ENCODE measurements at regions of chr5 and their contacts with region 1.

Region 1: DNA sequence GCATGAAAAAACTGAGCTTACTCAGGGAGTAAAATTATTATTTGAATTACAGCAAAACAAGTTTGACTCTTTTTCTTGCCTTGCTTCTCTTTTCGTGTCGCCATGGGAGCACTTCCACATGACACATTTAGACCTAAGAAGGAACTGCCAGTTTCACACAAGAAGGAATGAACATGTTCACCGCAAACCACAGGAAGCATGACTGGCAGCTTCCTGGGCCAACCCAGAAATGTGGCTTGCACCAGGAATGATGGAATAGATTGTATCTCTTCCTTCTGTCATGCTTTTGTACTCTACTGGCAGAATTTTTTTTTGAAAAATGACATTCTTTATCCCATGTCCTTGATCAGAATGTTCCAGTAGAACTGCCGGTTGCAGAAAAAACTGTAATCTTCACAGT is 32.9 kb upstream of the MAN2A1 start:
- DNase-seq: peak; percentile 91 to 98 (median 97)
- H3K4me3 ChIP-seq: peak overlapping the region in 1 of 3 experiments; percentile 50
- H3K4me3 Mint-ChIP-seq: peak overlapping the region in 1 of 2 donors; percentile 77
- H3K27ac ChIP-seq: peak overlapping the region in 1 of 2 donors; percentile 86
- H3K27ac Mint-ChIP-seq: peak overlapping the region; percentile 84 to 99 (median 98)
- H3K4me1 ChIP-seq: peaks cover 44 to 52% of the 10 kb centered on the region in 2 donors
- H3K4me1 Mint-ChIP-seq: peaks cover 47% of the 10 kb centered on the region
- H3K27me3 ChIP-seq: no peaks in the 10 kb centered on the region
- H3K27me3 Mint-ChIP-seq: no peaks in the 10 kb centered on the region
- CTCF ChIP-seq: no peak

Region 2: DNA sequence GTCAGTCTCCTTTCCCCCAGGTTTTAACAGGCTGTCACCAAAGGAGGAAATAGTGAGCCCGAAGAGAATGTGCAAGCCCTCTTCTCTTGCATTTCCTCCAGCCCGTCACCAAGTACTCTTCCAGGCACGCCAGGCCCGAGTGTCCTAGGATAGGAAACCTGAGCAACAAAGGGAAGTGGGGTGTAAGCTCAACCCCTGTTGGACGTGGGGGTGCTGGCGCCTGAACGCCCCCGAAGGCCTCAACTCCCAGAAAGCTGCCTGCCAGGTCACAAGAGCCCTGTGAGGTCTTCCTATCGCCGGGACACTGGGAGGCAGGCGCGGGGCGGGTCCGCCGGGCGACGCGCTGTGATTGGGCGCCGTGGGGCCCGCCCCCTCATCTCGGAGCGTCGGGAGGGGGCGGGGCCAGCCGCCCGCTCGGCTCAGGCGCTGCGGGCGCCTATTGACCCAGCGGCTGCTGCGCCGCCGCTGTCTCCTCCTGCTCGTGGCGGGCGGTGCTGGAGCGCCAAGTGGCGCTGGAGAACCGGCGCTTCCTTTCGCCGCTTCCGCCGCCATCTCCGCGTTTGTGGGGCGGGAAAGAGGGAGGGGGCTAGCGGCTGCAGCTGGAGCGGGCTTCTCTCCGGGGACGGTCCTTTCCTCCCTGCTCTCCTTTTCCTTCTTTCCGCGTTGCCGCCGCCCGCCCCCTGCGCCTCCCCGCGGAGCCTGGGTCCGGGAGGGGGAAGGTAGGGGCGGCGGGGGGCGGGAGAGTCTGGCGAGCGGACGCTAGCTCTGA is 32.3 kb after region 1 on chr5:
- intact Hi-C with region 1: loop called (anchors 2 kb)
- DNase-seq: peak; percentile 88 to 92 (median 88)
- H3K4me3 ChIP-seq: peak overlapping the region; percentile 75 to 94 (median 81)
- H3K4me3 Mint-ChIP-seq: peak overlapping the region; percentile 87 to 98
- H3K27ac ChIP-seq: peak overlapping the region; percentile 85 to 94
- H3K27ac Mint-ChIP-seq: peak overlapping the region; percentile 96 to 100 (median 99)
- H3K4me1 ChIP-seq: peaks cover 29 to 42% of the 10 kb centered on the region in 2 donors
- H3K4me1 Mint-ChIP-seq: peaks cover 44% of the 10 kb centered on the region
- H3K27me3 ChIP-seq: no peaks in the 10 kb centered on the region
- H3K27me3 Mint-ChIP-seq: no peaks in the 10 kb centered on the region
- CTCF ChIP-seq: peak; percentile 37

Region 3: DNA sequence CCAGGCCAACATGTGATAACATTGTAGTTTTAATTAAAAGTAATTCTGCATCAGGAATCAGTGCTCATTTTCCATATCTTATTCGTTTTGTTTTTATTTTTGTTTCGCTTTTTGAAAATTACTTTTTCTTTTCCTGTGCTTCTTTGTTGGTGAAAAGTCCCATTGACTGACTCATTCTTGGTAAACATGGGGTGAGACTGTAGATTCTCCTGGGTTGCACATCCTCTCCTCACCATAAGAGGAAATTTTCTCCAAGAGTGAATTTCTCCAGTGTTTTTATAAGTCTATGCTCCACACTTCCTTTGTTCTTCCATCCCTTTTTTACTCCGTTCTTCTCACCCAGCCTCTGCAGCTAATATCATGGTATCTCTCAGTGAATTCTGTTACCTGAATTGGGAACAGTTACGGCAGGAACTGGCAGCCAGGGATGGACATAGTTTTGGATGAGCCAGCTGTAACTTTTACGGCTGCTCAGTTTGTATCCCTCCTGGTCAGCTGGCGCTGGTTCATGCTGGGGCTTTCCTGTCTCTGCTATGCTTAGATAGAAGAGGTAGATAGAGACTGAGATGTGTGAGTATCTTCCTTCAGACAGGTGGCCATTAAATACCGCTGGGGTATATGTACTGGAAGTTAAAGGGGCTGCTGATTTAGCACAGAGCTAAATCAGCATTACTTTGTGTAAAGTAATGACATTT is 112.9 kb after region 1 on chr5:
- intact Hi-C with region 1: no loop called
- DNase-seq: no peak
- H3K4me3 ChIP-seq: no peak overlapping the region
- H3K4me3 Mint-ChIP-seq: no peak overlapping the region
- H3K27ac ChIP-seq: no peak overlapping the region
- H3K27ac Mint-ChIP-seq: peak overlapping the region in 1 of 7 donors; percentile 16
- H3K4me1 ChIP-seq: no peaks in the 10 kb centered on the region
- H3K4me1 Mint-ChIP-seq: no peaks in the 10 kb centered on the region
- H3K27me3 ChIP-seq: no peaks in the 10 kb centered on the region
- H3K27me3 Mint-ChIP-seq: no peaks in the 10 kb centered on the region
- CTCF ChIP-seq: no peak

Measured in CD14-positive monocyte (primary cell).